ENCODE measurements at regions of chr2 and their contacts with region 1.

Region 1: GRCh38 chr2:171574149-171574795 is 52.0 kb downstream of the CYBRD1 start:
- DNase-seq: peak; percentile 80 to 85
- ATAC-seq: peak; percentile 97 to 99
- H3K4me3 ChIP-seq: no peak overlapping the region
- H3K27ac ChIP-seq: 0 out of 6 replicates have a peak overlapping the region, but pooled peaks have one; percentile 2 to 46
- H3K4me1 ChIP-seq: no peaks in the 10 kb centered on the region
- CTCF ChIP-seq: peak; percentile 91
- EP300 ChIP-seq: no peak
- POLR2A ChIP-seq: no peak
- RAD21 ChIP-seq: peak; percentile 90 to 94

Region 2: GRCh38 chr2:171509945-171510731 is 64.1 kb before region 1 on chr2:
- CTCF ChIA-PET with region 1: no interaction called
- POLR2A ChIA-PET with region 1: no interaction called
- DNase-seq: no peak
- ATAC-seq: no peak
- H3K4me3 ChIP-seq: no peak overlapping the region
- H3K27ac ChIP-seq: no peak overlapping the region
- H3K4me1 ChIP-seq: no peaks in the 10 kb centered on the region
- CTCF ChIP-seq: no peak
- EP300 ChIP-seq: no peak
- POLR2A ChIP-seq: no peak
- RAD21 ChIP-seq: no peak

Region 3: GRCh38 chr2:171703574-171704347 is 129.5 kb after region 1 on chr2:
- CTCF ChIA-PET with region 1: interaction called, 15 read pairs
- POLR2A ChIA-PET with region 1: no interaction called
- DNase-seq: peak; percentile 11 to 54
- ATAC-seq: peak; percentile 30 to 81; a peak in 4 of 6 replicates
- H3K4me3 ChIP-seq: no peak overlapping the region
- H3K27ac ChIP-seq: no peak overlapping the region
- H3K4me1 ChIP-seq: peaks cover 35% of the 10 kb centered on the region
- CTCF ChIP-seq: peak; percentile 54
- EP300 ChIP-seq: no peak
- POLR2A ChIP-seq: no peak
- RAD21 ChIP-seq: peak; percentile 44 to 57; a peak in 4 of 5 replicates

Measured in A549 (cell line).